CD8-positive, alpha-beta T cell (primary cell): ENCODE measurements at regions of chr17 and their contacts with region 1.

Region 1: GRCh38 chr17:2380226-2380922 is 20.5 kb downstream of the MNT start:
- DNase-seq: no peak
- ATAC-seq: no peak
- H3K4me3 ChIP-seq: no peak overlapping the region
- H3K4me3 Mint-ChIP-seq: no peak overlapping the region
- H3K27ac ChIP-seq: no peak overlapping the region
- H3K27ac Mint-ChIP-seq: no peak overlapping the region
- H3K4me1 ChIP-seq: peaks cover 12% of the 10 kb centered on the region
- H3K4me1 Mint-ChIP-seq: peaks cover 2% of the 10 kb centered on the region
- H3K27me3 ChIP-seq: no peaks in the 10 kb centered on the region
- H3K27me3 Mint-ChIP-seq: no peaks in the 10 kb centered on the region
- CTCF ChIP-seq: no peak

Region 2: GRCh38 chr17:2354311-2354710 is 26.1 kb before region 1 on chr17:
- CTCF ChIA-PET with region 1: interaction called, 10 read pairs
- POLR2A ChIA-PET with region 1: no interaction called
- intact Hi-C with region 1: no loop called
- DNase-seq: no peak
- ATAC-seq: no peak
- H3K4me3 ChIP-seq: no peak overlapping the region
- H3K4me3 Mint-ChIP-seq: no peak overlapping the region
- H3K27ac ChIP-seq: no peak overlapping the region
- H3K27ac Mint-ChIP-seq: peak overlapping the region; percentile 92
- H3K4me1 ChIP-seq: peaks cover 19% of the 10 kb centered on the region
- H3K4me1 Mint-ChIP-seq: peaks cover 19% of the 10 kb centered on the region
- H3K27me3 ChIP-seq: no peaks in the 10 kb centered on the region
- H3K27me3 Mint-ChIP-seq: no peaks in the 10 kb centered on the region
- CTCF ChIP-seq: no peak

Region 3: GRCh38 chr17:2366747-2367494 is 13.5 kb before region 1 on chr17:
- CTCF ChIA-PET with region 1: interaction called, 54 read pairs
- POLR2A ChIA-PET with region 1: interaction called, 3 read pairs
- intact Hi-C with region 1: no loop called
- DNase-seq: no peak
- ATAC-seq: no peak
- H3K4me3 ChIP-seq: no peak overlapping the region
- H3K4me3 Mint-ChIP-seq: no peak overlapping the region
- H3K27ac ChIP-seq: no peak overlapping the region
- H3K27ac Mint-ChIP-seq: no peak overlapping the region
- H3K4me1 ChIP-seq: no peaks in the 10 kb centered on the region
- H3K4me1 Mint-ChIP-seq: no peaks in the 10 kb centered on the region
- H3K27me3 ChIP-seq: no peaks in the 10 kb centered on the region
- H3K27me3 Mint-ChIP-seq: no peaks in the 10 kb centered on the region
- CTCF ChIP-seq: no peak

Region 4: GRCh38 chr17:2392252-2393173 is 12.1 kb after region 1 on chr17:
- CTCF ChIA-PET with region 1: interaction called, 49 read pairs
- POLR2A ChIA-PET with region 1: interaction called, 13 read pairs
- intact Hi-C with region 1: no loop called
- DNase-seq: peak; percentile 95 to 99 (median 97)
- ATAC-seq: peak; percentile 66
- H3K4me3 ChIP-seq: peak overlapping the region; percentile 83 to 95
- H3K4me3 Mint-ChIP-seq: peak overlapping the region; percentile 91
- H3K27ac ChIP-seq: peak overlapping the region; percentile 95 to 100
- H3K27ac Mint-ChIP-seq: peak overlapping the region; percentile 97
- H3K4me1 ChIP-seq: peaks cover 53% of the 10 kb centered on the region
- H3K4me1 Mint-ChIP-seq: peaks cover 50% of the 10 kb centered on the region
- H3K27me3 ChIP-seq: no peaks in the 10 kb centered on the region
- H3K27me3 Mint-ChIP-seq: no peaks in the 10 kb centered on the region
- CTCF ChIP-seq: no peak

Region 5: DNA sequence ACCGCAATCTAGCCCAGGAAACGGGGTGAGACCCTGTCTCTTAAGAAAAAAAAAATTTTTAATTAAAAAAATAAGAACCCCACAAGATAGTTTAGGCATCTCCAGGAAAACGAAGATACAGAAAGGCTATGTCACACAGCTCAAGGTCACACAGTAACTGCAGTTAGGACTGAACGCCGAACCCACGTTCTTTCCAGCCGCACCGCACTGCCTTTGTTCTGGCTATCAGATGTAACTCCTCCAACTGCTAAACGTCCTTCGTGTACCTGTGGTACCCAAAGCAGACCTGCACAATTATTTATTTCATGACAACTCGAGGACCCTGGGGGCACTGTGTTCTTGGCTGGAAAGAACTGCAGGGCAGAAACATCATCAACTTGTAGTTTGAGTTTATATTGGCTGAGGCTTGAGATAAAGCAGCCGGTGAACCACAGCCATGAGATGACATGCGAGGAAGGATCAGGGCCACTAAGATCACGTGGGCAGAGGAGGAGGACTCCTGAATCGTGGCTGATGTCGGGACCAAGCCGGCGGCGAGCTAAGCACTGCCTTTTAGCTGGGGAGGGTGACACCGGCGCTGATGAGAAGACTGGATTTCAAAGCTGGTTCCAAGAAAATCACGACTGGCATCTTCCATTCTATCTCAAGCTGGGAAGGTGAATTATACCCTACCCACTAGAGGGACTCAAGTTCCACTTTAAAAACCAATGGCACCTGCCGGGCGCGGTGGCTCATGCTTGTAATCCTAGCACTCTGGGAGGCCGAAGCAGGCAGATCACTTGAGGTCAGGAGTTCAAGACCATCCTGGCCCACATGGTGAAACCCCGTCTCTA is 41.2 kb after region 1 on chr17:
- CTCF ChIA-PET with region 1: interaction called, 465 read pairs
- POLR2A ChIA-PET with region 1: interaction called, 26 read pairs
- intact Hi-C with region 1: loop called (anchors 1 kb)
- DNase-seq: no peak
- ATAC-seq: no peak
- H3K4me3 ChIP-seq: no peak overlapping the region
- H3K4me3 Mint-ChIP-seq: no peak overlapping the region
- H3K27ac ChIP-seq: no peak overlapping the region
- H3K27ac Mint-ChIP-seq: no peak overlapping the region
- H3K4me1 ChIP-seq: no peaks in the 10 kb centered on the region
- H3K4me1 Mint-ChIP-seq: no peaks in the 10 kb centered on the region
- H3K27me3 ChIP-seq: no peaks in the 10 kb centered on the region
- H3K27me3 Mint-ChIP-seq: no peaks in the 10 kb centered on the region
- CTCF ChIP-seq: no peak